HEK293T (cell line): ENCODE measurements at regions of chr6 and their contacts with region 1.

Region 1: DNA sequence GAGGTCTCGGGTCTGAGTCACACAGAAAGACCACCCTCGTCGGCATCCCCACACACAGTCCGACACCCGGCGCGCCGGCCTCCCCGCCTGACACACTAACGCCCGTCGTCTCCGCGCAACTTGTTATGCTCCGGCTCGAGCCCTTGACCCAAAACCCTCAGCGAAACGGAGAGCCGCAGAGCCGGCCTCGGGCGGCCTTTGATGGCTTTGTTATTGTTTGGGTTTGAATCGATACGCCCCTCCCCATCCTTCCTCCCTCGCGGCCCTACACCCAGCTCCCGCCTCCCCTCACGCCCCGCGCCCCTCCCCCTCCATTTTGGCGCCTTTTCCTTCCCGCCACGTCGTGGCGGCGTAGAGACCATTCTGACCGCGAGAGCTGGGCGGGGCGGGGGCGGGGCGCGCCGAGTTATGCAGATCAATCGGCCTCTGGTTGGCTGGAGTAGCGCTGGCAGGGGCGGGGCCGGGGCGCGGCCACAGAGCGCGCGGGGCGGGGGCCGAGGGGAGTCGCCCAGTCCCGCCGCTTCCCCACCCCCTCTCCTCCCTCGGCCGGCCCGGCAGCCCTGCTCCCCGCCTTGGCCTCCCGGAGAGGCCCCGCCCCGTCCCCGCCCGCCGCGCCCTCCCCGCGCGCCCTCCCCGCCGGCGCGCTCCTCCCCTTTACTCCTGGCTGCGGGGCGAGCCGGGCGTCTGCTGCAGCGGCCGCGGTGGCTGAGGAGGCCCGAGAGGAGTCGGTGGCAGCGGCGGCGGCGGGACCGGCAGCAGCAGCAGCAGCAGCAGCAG is at the start of gene PIM1:
- DNase-seq: peak; percentile 95

Region 2: DNA sequence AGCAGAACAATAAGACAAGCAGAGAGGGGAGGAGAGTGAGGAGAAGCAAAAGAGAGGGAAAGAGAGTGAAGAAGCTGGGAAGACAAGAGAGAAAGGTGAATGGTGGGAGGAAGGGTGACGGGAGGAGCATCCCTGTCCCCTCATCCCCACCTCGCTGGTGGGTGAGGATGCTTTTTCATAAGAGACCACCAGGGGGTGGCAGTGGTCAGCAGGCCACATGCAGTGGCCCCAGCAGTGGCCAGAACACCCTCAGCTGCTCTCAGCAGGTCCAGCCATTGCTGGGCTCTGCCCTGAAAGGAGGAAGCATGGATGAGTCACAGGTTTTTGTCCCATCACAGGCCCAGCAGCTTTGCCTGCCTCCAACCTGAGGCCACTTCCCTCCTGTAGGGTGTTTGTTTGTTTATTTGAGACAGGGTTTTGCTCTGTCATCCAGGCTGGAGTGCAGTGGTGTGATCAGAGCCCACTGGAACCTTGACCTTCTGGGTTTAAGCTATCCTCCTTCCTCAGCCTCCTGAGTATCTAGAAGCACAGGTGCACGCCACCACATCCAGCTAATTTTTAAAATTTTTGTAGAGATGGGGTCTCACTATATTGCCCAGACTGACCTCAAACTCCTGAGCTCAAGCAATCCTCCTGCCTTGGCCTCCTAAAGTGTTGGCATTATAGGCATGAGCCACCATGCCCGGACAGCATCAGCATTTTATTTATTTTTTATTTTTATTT is 140.3 kb before region 1 on chr6:
- CTCF ChIA-PET with region 1: interaction called, 13 read pairs
- POLR2A ChIA-PET with region 1: interaction called, 4 read pairs
- DNase-seq: peak; percentile 76

Region 3: DNA sequence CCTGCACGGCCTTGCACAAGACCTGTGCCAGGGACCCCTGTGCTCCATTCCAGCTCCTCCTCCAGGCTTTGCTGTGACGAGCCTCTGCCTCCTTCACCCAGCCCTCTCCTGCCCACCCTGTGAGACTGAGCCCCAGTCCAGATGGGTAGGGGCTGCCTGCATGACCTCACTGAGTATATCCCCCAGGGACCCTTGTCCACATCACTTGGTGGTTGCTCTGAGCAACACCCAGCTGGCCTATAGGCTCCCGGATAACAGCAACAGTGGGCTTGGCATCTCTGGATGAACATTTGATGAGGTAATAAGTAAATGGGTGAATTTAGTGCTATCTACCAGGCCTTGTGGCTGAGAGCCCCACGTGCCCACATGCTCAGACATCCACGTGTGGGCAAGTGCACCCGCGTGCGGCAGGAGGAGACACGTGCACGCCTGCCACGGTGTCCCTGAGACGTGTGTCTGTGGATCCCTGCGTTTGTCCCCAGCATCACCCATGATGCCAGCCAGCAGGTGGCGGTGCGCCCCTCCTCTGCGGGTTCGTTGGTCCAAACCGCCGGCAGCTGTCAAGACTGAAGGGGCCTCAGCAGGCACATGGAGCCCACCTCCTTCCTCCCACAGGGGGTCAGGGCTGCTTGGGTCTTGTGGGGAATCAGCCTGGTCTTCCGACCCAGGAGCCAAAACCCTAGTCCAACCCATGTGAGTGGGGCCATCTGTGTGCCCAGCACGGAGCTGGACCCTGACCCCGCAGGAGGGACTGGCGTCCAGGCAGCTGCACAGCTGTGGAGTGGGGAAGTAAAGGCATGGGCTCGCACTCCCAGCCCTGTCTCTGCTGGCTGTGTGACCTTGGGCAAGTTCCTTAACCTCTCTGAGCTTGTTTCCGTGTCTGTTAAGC is 118.3 kb before region 1 on chr6:
- CTCF ChIA-PET with region 1: interaction called, 25 read pairs
- POLR2A ChIA-PET with region 1: interaction called, 13 read pairs
- DNase-seq: peak; percentile 81

Region 4: GRCh38 chr6:37059344-37060206 is 110.1 kb before region 1 on chr6:
- CTCF ChIA-PET with region 1: interaction called, 8 read pairs
- POLR2A ChIA-PET with region 1: interaction called, 26 read pairs
- DNase-seq: peak; percentile 46

Region 5: GRCh38 chr6:37110500-37111461 is 58.9 kb before region 1 on chr6:
- CTCF ChIA-PET with region 1: interaction called, 3 read pairs
- POLR2A ChIA-PET with region 1: interaction called, 14 read pairs
- DNase-seq: no peak

Region 6: DNA sequence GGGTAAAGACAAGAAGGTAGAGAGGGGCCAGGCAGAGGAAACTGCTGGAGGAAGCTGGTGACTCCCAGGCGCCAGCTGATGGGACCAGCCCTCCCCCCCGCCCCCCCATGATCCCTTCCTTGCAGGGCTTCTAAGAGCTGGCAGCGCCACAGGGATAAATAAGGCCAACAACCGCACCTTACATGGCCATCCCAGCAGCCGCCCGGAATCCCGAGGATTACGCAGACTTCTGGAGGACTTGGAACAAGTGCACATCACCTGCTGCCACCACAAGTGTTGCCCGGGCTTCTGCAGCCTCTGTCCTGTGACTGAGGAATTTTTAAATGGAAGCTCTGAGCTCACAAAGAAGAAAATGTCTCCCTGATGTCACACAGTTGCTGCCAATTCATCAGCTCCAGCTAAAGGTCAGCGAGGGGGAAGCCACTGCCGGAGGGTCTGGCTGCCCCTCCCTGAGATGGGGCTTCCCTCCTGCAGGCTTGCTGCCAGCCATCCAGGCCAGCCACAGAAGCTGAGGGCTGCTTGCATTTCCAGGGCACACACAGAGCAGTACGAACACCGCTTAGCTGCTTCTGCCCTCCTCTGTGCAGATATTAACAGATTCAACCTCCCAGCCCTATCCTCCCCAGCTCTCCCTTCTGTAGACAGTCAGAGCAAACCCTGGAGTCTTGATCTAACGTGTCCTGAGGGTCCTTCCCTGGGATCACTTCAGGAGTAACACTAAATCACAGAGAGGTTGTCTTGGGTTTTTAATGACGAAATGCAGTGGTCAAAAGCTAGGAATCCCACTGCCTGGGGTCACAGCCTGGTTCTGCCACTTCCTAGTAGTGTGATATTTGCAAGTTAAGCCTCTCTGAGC is 38.4 kb before region 1 on chr6:
- CTCF ChIA-PET with region 1: interaction called, 6 read pairs
- POLR2A ChIA-PET with region 1: interaction called, 54 read pairs
- DNase-seq: no peak

Region 7: DNA sequence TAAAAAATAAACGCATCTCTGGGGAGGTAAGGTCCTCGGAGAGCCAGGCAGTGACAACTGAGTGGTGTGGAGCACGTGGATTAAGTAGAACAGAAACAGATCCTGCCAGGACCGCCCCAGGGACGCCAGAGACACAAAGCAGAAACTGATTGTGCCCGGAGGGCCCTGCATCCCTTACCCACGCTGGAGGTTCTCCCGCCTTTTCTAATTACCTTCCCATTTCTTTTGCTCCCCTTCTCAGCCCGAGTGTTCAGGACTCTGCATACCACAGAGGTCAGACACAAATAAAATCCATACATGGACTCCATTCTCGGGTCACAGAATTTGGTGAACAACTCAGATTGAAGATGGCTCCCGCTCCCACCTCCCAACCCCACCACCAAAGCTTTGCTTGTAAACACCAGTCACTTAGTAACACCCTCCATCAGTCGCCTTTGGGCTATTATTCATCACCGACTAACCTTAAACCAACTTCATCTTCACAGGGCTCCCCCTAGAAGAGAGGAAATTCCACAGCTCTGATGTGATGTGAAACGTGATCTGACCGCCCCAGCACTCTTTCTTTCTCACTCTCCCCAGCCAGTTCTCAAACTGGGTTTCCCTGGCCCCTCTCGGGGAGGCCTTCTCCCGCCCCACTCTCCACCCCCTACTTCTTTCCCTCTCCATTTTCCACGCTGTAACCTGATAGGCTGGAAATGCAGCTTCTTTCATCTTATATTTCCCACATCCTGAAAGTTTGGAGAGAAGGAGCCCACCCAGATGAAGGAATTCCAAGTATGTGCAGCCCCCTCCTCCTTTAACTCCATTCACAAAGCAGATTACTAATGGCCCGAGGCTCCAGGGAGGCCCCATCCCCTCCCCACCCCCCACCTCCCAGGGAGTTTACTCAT is 32.2 kb before region 1 on chr6:
- CTCF ChIA-PET with region 1: interaction called, 6 read pairs
- POLR2A ChIA-PET with region 1: interaction called, 54 read pairs
- DNase-seq: peak; percentile 48

Region 8: DNA sequence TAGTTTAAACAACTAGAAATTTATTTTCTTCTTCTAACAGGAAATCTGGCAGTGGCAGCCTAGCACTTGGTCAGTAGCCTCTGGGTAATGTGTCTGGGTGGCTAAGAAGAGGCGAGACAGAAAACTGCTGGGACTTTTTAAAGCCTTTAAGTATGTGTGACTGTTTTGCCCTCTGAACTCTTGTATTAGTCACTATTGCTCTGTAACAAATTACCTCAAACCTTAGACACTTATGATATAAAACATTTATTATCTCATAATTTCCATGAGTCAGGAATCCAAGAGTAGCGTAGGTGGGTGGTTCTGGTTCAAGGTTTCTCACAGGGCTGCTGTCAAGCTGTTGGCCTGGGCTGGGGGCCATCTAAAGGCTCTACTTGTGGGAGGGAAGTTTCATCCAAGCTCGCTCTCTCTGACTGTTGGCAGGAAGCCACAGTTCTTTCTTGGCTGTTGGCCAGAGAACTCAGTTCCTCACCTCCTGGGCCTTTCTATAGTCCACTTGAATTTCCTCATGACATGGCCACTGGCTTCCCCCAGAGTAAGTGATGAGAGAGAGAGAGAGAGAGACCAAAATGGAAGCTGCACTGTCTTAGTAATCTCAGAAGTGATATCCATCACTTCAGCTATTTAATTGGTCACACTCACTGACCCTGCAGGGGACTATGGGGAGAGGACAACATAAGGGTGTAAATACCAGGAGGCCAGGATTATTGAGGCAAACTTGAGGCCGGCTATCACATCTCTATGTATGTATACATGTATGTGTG is 70.4 kb after region 1 on chr6:
- CTCF ChIA-PET with region 1: no interaction called
- POLR2A ChIA-PET with region 1: no interaction called
- DNase-seq: peak; percentile 52

Region 9: GRCh38 chr6:37565267-37566110 is 395.8 kb after region 1 on chr6:
- CTCF ChIA-PET with region 1: no interaction called
- POLR2A ChIA-PET with region 1: no interaction called
- DNase-seq: peak; percentile 42